Activated CD4-positive, alpha-beta T cell treated with anti-CD3 and anti-CD28 coated beads for 36 hours (primary cell): ENCODE measurements at regions of chr12 and their contacts with region 1.

Region 1: DNA sequence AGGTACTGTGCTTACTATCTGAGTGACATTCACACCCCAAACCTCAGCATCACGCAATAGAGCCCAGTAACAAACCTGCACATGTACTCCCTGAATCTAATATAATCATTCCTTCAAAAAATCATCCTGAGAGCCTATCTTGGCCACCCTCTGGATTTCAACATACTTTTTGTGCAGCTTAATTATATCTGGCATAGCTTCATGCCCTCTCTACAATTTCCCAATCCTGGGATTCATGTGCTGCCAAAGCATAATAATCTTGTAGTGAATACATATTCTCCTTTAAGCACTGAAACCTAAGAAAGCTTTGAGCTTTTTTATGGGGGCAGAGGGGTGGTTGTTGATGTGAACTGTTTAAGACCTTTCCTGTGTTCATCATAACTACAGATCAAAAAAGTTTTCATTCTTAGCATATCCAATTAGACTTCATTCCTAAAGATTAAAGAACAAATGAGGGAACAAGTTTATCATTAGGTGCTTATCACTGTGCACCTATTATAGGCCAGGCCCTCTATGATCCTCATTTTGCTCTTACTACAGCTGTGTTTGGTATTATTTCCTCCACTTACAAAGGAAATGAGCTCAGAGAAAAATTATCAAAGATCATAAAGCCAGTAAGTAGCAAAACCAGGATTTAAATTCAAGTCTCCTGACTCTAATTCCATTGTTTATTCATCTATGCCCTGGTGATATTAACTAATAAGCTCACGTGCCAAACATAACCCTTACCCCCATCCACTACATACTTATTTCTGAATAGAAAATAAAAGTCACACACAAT is 51.2 kb downstream of the SINHCAF start:
- DNase-seq: no peak
- ATAC-seq: no peak
- H3K4me3 Mint-ChIP-seq: no peak overlapping the region
- H3K27ac Mint-ChIP-seq: peak overlapping the region; percentile 7
- H3K4me1 Mint-ChIP-seq: no peaks in the 10 kb centered on the region
- H3K27me3 Mint-ChIP-seq: no peaks in the 10 kb centered on the region

Region 2: DNA sequence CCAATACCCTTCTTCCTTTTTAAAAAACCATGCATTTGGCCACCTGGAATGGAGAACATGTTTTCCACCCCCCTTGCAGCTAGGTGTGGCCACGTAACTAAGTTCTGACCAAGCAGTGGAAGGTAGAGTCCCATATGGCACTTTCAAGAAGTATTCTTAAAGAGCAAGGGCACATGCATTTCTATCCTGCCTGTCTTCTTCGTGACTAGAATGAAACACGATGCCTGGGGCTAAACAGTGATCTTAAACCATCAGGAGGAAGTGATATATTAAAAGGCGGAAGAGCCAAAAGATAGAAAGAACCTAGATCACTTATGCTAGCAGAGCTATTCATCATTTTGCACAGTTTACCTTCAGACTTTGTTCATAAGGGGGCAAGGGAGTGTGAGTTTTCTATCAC is 217.0 kb before region 1 on chr12:
- CTCF ChIA-PET with region 1: no interaction called
- POLR2A ChIA-PET with region 1: no interaction called
- intact Hi-C with region 1: no loop called
- DNase-seq: no peak
- ATAC-seq: no peak
- H3K4me3 Mint-ChIP-seq: no peak overlapping the region
- H3K27ac Mint-ChIP-seq: no peak overlapping the region
- H3K4me1 Mint-ChIP-seq: peaks cover 6% of the 10 kb centered on the region
- H3K27me3 Mint-ChIP-seq: no peaks in the 10 kb centered on the region

Region 3: DNA sequence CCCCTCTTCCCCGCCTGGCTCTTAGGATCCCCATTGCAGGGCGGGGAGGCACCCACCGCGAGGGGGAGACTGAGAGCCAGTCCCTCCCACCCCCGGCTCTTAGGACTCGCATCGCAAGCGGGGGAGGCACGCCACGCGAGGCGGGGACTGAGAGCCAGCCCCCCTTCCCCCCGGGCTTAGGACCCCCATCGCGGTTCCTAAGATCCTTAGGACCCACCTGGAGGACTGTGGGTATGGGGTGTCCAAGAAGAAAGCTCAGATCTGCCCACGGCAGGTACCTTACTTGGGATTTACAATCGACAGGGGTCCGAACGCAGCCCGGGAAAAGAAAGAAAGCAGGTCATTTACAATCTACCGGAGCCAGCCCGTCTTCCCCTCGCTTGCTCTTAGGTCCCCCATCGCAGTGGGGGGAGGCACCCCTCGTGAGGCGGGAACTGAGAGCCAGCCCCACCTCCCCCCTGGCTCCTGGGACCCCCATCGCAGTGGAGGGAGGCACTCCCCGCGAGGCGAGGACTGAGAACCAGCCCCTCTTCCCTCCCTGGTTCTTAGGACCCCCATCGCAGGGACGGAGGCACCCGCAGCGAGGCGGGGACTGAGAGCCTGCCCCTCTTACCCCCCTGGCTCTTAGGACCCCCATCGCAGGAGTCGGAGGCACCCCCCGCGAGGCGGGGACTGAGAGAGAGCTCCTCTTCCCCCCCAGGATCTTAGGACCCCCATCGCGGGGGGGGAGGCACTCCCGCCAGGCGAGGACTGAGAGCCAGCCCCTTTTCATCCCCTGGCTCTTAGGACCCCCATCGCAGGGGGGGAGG is 157.3 kb before region 1 on chr12:
- CTCF ChIA-PET with region 1: interaction called, 6 read pairs
- POLR2A ChIA-PET with region 1: no interaction called
- intact Hi-C with region 1: loop called in 1 of 2 experiments (anchors 10 kb)
- DNase-seq: peak; percentile 78
- ATAC-seq: peak; percentile 77
- H3K4me3 Mint-ChIP-seq: peak overlapping the region; percentile 59
- H3K27ac Mint-ChIP-seq: no peak overlapping the region
- H3K4me1 Mint-ChIP-seq: peaks cover 3% of the 10 kb centered on the region
- H3K27me3 Mint-ChIP-seq: peaks cover 15% of the 10 kb centered on the region

Region 4: DNA sequence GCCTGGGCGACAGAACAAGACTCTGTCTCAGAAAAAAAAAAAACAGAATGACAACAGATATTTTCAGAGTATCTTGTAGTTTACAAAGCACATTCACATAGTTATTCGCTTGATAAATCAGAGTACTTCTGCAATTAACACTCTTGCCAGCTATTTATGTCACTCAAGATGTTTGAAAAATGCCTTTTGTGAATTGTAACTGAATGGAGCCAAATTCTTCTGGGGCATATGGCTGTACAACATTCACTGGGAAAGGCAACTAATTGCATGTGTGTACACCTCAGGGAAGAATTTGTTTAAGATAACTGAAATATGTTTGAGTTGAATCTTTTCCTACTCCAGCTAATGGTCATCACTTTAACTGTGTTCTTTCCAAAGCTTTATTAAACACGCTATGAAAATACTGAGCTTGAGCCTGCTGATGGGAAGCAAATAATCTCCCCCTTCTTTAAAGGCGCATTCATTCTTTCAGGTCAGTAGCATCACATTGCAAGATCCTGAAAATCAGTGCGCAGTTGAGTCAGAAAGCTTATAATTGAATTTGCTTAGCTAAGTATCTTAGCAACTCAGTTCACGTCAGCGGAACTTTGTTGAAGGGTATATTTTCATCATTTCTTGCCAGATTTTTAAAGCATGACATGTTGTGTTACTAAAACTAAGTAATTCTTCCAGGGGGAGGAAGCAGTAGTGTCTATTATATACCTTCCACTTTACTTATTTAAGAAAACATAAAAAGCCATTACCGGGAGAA is 15.4 kb before region 1 on chr12:
- CTCF ChIA-PET with region 1: interaction called, 26 read pairs
- POLR2A ChIA-PET with region 1: no interaction called
- intact Hi-C with region 1: no loop called
- DNase-seq: no peak
- ATAC-seq: no peak
- H3K4me3 Mint-ChIP-seq: no peak overlapping the region
- H3K27ac Mint-ChIP-seq: no peak overlapping the region
- H3K4me1 Mint-ChIP-seq: no peaks in the 10 kb centered on the region
- H3K27me3 Mint-ChIP-seq: no peaks in the 10 kb centered on the region

Region 5: DNA sequence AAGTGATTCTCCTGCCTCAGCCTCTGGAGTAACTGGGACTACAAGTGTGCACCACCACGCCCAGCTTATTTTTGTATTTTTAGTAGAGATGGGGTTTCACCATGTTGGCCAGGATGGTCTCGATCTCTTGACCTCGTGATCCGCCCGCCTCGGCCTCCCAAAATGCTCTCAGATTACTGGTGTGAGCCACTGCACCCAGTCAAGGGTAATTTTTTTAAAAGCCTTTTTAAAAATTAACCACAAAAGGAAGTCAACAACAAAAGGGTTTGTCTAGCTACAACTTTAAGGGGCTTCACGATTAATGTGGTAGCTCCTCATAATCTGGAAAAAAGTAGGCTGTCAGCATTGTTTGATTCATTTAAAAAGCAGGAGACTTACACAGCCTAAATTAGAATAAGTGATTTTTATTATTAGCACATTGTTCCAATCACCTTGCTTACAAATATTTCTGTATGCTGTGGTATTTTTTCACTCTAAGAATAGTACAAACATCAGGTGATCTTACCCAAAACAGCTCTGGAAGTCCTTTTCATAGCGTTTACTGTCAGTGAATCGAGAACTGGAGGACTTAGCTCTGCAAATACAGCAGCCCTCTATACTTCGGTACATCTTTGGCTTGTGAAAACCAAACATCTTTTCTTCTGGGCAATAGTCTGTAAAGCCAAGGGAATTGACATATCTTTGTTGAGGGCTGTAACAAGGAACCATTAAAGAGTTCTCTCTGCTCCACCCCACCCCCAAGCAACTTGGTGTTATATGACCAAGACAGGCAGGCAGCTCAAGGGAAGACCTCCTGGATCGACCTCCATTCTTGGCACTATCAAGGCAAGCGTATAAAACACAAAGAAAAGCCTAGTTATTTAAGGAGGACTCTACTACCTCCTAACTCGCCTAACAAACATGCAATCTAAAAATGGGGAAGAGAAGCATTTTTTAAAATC is 23.1 kb after region 1 on chr12:
- CTCF ChIA-PET with region 1: interaction called, 24 read pairs
- POLR2A ChIA-PET with region 1: no interaction called
- intact Hi-C with region 1: no loop called
- DNase-seq: no peak
- ATAC-seq: no peak
- H3K4me3 Mint-ChIP-seq: no peak overlapping the region
- H3K27ac Mint-ChIP-seq: peak overlapping the region; percentile 83
- H3K4me1 Mint-ChIP-seq: peaks cover 26% of the 10 kb centered on the region
- H3K27me3 Mint-ChIP-seq: no peaks in the 10 kb centered on the region